ENCODE measurements at regions of chr3 and their contacts with region 1.

Region 1: DNA sequence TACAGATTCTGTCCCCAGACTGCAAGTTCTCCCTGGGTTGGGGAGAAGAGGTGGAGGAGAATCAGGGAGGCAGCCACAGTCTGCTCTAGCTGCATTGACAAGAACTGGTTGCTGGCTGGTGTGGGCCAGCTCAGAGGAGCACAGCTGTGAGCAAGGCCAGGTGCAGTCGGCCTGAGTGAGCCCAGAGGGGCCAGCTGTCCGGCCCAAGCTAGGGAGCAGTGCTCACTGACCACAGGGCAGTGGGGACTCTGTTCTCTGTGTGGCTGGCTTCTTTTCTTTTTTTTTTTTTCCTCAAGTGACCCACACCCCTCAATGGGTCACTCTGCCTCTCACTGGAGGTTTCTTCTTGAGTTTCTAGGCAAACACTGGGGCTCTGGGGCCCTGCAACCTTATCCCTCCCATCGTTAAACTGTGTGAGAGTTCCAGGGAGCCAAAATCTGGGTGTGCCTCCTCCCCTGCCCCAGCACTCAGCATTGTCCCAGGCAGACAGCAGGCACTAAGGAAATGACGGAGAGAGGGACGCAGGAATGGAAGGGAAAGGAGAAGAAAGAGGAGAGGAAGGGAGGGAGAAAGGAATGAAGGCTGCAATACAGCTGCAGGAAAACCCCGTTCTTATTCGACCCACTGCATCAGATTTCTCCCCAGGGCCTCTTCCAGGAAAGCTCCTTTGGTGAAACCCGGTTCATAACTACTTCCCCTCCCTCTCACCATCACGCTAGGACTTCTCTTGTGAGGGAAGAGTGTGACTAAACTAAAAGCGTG is 37.7 kb upstream of the HES1 start:
- DNase-seq: no peak
- ATAC-seq: peak; percentile 55
- H3K4me3 ChIP-seq: no peak overlapping the region
- H3K27ac ChIP-seq: no peak overlapping the region
- H3K4me1 ChIP-seq: peaks cover 28% of the 10 kb centered on the region
- H3K27me3 ChIP-seq: no peaks in the 10 kb centered on the region
- CTCF ChIP-seq: no peak

Region 2: DNA sequence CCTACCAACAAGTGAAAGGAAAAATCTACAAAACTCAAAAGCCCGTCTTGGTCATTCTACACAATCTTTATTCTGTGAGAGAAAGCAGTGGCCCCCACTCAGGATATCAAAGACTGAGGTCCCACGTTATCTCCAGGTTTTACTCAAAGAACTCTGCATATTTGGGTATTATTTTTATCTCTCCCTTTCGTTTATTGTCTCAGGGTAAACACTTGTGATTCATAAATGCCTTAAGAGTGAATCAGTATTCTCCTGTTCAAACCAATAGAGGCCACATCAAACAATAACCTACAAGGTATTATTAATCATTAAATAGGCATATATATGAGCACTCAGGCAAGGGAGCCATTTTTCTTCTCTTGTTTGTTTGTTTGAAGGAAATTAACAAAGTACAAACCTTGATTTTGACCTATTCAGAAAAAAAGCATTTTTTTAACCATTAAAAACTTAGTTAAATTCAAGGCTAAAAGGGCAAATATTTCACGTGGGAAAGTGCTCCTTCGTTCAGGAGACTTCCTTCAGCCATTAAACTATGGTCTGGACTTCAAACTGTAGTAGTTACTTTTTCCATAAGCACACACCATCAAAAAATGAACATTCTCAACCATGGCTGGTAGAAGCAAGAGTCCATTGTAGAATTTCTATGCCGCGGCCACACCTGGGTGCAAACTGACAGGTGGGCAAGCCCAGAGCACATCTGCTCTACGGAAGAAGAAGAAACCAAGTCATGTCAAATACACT is 23.8 kb after region 1 on chr3:
- CTCF ChIA-PET with region 1: interaction called, 10 read pairs
- POLR2A ChIA-PET with region 1: no interaction called
- intact Hi-C with region 1: no loop called
- DNase-seq: peak; percentile 88
- ATAC-seq: peak; percentile 95
- H3K4me3 ChIP-seq: peak overlapping the region; percentile 5; the same call in 1 of the 2 replicates
- H3K27ac ChIP-seq: peak overlapping the region; percentile 46
- H3K4me1 ChIP-seq: peaks cover 38% of the 10 kb centered on the region
- H3K27me3 ChIP-seq: no peaks in the 10 kb centered on the region
- CTCF ChIP-seq: no peak